WTC11 (cell line): ENCODE measurements at regions of chr1 and their contacts with region 1.

Region 1: GRCh38 chr1:31715087-31715872 is 11.5 kb upstream of the COL16A1 start:
- DNase-seq: peak; percentile 99
- ATAC-seq: peak; percentile 92
- H3K4me3 Mint-ChIP-seq: peak overlapping the region; percentile 92
- H3K27ac Mint-ChIP-seq: peak overlapping the region; percentile 98
- H3K4me1 Mint-ChIP-seq: peaks cover 22% of the 10 kb centered on the region
- H3K27me3 Mint-ChIP-seq: peaks cover 4% of the 10 kb centered on the region
- CTCF ChIP-seq: peak; percentile 75

Region 2: GRCh38 chr1:31617917-31618660 is 97.2 kb before region 1 on chr1:
- CTCF ChIA-PET with region 1: interaction called, 13 read pairs
- POLR2A ChIA-PET with region 1: no interaction called
- DNase-seq: peak; percentile 82
- ATAC-seq: peak; percentile 80
- H3K4me3 Mint-ChIP-seq: peak overlapping the region; percentile 50
- H3K27ac Mint-ChIP-seq: no peak overlapping the region
- H3K4me1 Mint-ChIP-seq: peaks cover 14% of the 10 kb centered on the region
- H3K27me3 Mint-ChIP-seq: peaks cover 29% of the 10 kb centered on the region
- CTCF ChIP-seq: peak; percentile 87

Region 3: GRCh38 chr1:31663622-31664452 is 51.4 kb before region 1 on chr1:
- CTCF ChIA-PET with region 1: interaction called, 61 read pairs
- POLR2A ChIA-PET with region 1: no interaction called
- DNase-seq: peak; percentile 89
- ATAC-seq: peak; percentile 83
- H3K4me3 Mint-ChIP-seq: no peak overlapping the region
- H3K27ac Mint-ChIP-seq: no peak overlapping the region
- H3K4me1 Mint-ChIP-seq: peaks cover 3% of the 10 kb centered on the region
- H3K27me3 Mint-ChIP-seq: no peaks in the 10 kb centered on the region
- CTCF ChIP-seq: peak; percentile 91

Region 4: DNA sequence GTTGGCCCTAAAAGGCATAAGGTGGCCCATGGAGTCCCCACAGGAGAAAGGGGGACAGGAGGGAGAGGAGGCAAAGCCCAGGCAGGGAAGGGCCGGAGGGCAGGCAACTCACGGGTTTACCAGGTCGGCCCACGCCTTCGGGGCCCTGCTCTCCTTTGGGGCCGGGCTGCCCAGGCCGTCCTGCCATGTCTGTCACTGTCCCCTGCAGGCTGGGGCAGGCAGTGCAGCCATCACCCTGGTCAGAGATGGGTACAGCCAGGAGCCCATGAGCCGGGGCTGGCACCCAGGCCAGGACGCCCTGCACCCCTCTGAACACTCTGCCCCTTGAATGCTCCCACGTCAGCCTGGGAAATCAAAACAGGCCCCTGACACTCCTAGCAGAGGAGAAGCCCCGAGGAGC is 31.3 kb before region 1 on chr1:
- CTCF ChIA-PET with region 1: interaction called, 21 read pairs
- POLR2A ChIA-PET with region 1: no interaction called
- DNase-seq: peak; percentile 81
- ATAC-seq: peak; percentile 93
- H3K4me3 Mint-ChIP-seq: no peak overlapping the region
- H3K27ac Mint-ChIP-seq: no peak overlapping the region
- H3K4me1 Mint-ChIP-seq: no peaks in the 10 kb centered on the region
- H3K27me3 Mint-ChIP-seq: no peaks in the 10 kb centered on the region; the same call in 1 of the 2 replicates
- CTCF ChIP-seq: peak; percentile 54

Region 5: GRCh38 chr1:31705080-31705866 is 10.0 kb before region 1 on chr1:
- CTCF ChIA-PET with region 1: interaction called, 196 read pairs
- POLR2A ChIA-PET with region 1: interaction called, 15 read pairs
- DNase-seq: peak; percentile 75
- ATAC-seq: peak; percentile 40
- H3K4me3 Mint-ChIP-seq: peak overlapping the region; percentile 76
- H3K27ac Mint-ChIP-seq: peak overlapping the region; percentile 91
- H3K4me1 Mint-ChIP-seq: peaks cover 42% of the 10 kb centered on the region
- H3K27me3 Mint-ChIP-seq: peaks cover 6% of the 10 kb centered on the region
- CTCF ChIP-seq: no peak

Region 6: DNA sequence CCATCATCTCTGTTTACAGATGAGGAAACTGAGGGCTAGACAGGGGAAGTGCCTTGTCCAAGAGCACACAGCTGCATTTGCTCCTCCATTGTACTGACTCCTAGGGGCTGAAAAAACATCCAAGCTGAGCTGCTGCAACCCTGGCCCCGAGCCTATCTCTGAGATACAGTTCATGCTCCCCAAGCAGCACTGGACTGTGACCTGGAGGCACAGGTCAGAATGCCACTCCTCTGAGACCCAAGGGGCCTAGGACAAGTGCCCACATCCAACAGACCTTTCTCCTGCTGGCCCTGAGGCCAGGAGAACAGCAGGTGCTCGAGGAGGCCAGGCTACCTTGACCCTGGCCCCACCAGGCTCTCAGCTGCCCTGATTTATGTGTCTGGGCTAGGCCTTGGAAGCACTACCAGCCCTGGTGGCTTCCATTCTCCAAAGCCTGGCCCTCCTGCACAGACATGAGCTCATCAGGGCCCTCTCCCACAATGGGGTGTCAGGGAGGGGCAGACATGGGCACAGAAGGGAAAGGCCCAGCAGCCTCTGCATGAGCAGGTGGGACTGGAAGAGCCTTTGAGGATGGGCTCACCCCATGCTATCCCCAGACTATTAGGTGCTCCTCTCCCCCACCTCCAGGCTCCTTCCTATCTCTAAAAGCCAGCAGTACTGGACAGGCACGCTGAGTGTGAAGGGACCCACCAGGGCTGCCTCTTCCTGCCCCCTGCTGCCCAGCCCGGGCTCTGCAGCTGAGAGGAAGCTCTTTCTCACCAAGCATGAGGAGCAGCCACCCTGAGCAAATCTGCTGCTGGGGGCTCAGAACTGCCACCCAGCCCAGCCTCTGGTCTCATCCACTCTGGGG is 30.0 kb after region 1 on chr1:
- CTCF ChIA-PET with region 1: interaction called, 179 read pairs
- POLR2A ChIA-PET with region 1: no interaction called
- DNase-seq: peak; percentile 82
- ATAC-seq: peak; percentile 82
- H3K4me3 Mint-ChIP-seq: no peak overlapping the region
- H3K27ac Mint-ChIP-seq: no peak overlapping the region
- H3K4me1 Mint-ChIP-seq: peaks cover 37% of the 10 kb centered on the region
- H3K27me3 Mint-ChIP-seq: no peaks in the 10 kb centered on the region; the same call in 1 of the 2 replicates
- CTCF ChIP-seq: peak; percentile 71

Region 7: DNA sequence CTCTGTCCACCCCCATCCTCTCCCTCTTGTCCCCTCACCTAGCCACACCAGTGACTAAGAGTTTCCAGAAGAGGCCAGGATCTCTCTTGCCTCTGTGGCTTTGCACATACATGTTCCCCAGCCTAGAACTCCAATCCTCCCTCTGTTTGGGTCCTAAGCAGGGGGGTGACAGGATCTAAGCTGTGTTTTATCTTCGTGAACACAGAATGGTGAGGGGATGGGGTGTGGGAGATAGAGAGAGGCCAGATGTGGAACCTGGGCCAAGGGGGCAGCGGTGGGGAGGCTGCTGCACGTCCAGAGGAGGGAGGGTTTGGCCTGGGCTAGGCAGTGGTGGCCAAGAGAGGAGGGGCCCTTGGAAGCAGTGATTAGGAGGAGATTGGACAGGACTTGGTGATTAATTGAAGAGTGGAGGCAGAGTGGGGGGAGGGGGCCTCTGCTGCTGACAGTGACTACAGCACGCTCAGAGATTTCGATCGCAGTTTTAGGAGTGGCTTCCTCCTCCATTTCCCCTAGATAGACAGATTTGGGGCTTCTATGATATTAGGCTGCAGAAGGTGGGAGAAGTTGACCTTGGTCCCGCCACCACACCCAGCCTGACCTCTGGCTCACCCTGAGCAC is 66.0 kb after region 1 on chr1:
- CTCF ChIA-PET with region 1: interaction called, 12 read pairs
- POLR2A ChIA-PET with region 1: no interaction called
- DNase-seq: no peak
- ATAC-seq: no peak
- H3K4me3 Mint-ChIP-seq: no peak overlapping the region
- H3K27ac Mint-ChIP-seq: no peak overlapping the region
- H3K4me1 Mint-ChIP-seq: peaks cover 38% of the 10 kb centered on the region
- H3K27me3 Mint-ChIP-seq: peaks cover 12% of the 10 kb centered on the region; the same call in 1 of the 2 replicates
- CTCF ChIP-seq: no peak

Region 8: DNA sequence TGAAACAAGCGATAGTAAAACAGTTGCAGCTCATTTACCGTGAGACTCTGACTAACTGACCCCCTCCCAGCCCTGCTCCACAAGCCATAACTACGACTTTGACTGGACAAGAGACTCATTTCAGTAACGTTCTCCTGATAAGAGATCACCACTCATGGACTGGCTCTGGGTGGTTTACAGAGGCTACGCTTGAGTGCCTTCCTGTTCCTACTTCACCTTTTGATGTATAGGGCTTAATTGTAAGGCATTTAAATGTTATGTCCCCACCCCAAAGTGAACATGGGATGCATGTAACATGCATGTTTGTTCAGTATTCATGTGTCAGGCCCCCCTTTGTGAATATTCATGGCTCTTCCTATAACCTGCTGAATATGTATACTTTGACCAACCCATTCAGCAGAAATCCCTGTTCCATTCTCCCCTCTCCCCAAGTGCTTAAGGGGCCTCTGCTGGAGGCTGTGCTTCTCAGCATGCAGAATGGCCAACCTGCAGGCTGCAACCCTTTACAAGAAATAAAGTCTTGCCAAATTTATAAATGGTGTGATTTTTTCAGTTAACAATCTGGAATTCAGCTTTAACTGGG is 151.3 kb after region 1 on chr1:
- CTCF ChIA-PET with region 1: no interaction called
- POLR2A ChIA-PET with region 1: no interaction called
- DNase-seq: no peak
- ATAC-seq: no peak
- H3K4me3 Mint-ChIP-seq: no peak overlapping the region
- H3K27ac Mint-ChIP-seq: no peak overlapping the region
- H3K4me1 Mint-ChIP-seq: peaks cover 4% of the 10 kb centered on the region
- H3K27me3 Mint-ChIP-seq: no peaks in the 10 kb centered on the region; the same call in 1 of the 2 replicates
- CTCF ChIP-seq: no peak